Activated B cell treated with CpG ODN at 0.5 μM for 24 hours (primary cell): ENCODE measurements at regions of chr16 and their contacts with region 1.

Region 1: GRCh38 chr16:1782352-1783091 is at the starts of genes NUBP2 and SPSB3:
- DNase-seq: peak; percentile 91
- ATAC-seq: peak; percentile 88
- H3K4me3 Mint-ChIP-seq: peak within 1 kb of the TSS; percentile 89
- H3K27ac Mint-ChIP-seq: peak within 1 kb of the TSS; percentile 87
- H3K4me1 Mint-ChIP-seq: peaks cover 24% of the 10 kb centered on the region
- H3K27me3 Mint-ChIP-seq: no peaks in the 10 kb centered on the region
- CTCF ChIP-seq: no peak
- total RNA-seq, gene NUBP2: 53.7 and 54.2 TPM in 2 replicates
- total RNA-seq, gene SPSB3: 36.4 and 40.3 TPM in 2 replicates

Region 2: GRCh38 chr16:1677802-1678496 is 104.6 kb before region 1 on chr16 and contains the start of gene JPT2:
- CTCF ChIA-PET with region 1: no interaction called
- POLR2A ChIA-PET with region 1: interaction called, 10 read pairs
- intact Hi-C with region 1: no loop called
- DNase-seq: peak; percentile 92
- ATAC-seq: peak; percentile 96
- H3K4me3 Mint-ChIP-seq: peak within 1 kb of the TSS; percentile 89
- H3K27ac Mint-ChIP-seq: peak within 1 kb of the TSS; percentile 76
- H3K4me1 Mint-ChIP-seq: peaks cover 29% of the 10 kb centered on the region
- H3K27me3 Mint-ChIP-seq: no peaks in the 10 kb centered on the region
- CTCF ChIP-seq: no peak
- total RNA-seq, gene JPT2: 43.4 and 48.7 TPM in 2 replicates

Region 3: GRCh38 chr16:1713933-1714332 is 68.6 kb before region 1 on chr16:
- CTCF ChIA-PET with region 1: no interaction called
- POLR2A ChIA-PET with region 1: interaction called, 5 read pairs
- intact Hi-C with region 1: loop called (anchors 2 kb)
- DNase-seq: peak; percentile 49
- ATAC-seq: peak; percentile 90
- H3K4me3 Mint-ChIP-seq: peak overlapping the region; percentile 70
- H3K27ac Mint-ChIP-seq: peak overlapping the region; percentile 94
- H3K4me1 Mint-ChIP-seq: peaks cover 76% of the 10 kb centered on the region
- H3K27me3 Mint-ChIP-seq: no peaks in the 10 kb centered on the region
- CTCF ChIP-seq: no peak

Region 4: GRCh38 chr16:1942810-1943726 is 160.5 kb after region 1 on chr16 and contains the start of gene MSRB1:
- CTCF ChIA-PET with region 1: no interaction called
- POLR2A ChIA-PET with region 1: interaction called, 4 read pairs
- intact Hi-C with region 1: loop called (anchors 1 kb)
- DNase-seq: peak; percentile 99
- ATAC-seq: peak; percentile 98
- H3K4me3 Mint-ChIP-seq: peak within 1 kb of the TSS; percentile 87
- H3K27ac Mint-ChIP-seq: peak within 1 kb of the TSS; percentile 74
- H3K4me1 Mint-ChIP-seq: peaks cover 30% of the 10 kb centered on the region
- H3K27me3 Mint-ChIP-seq: no peaks in the 10 kb centered on the region
- CTCF ChIP-seq: no peak
- total RNA-seq, gene MSRB1: 14.7 and 16.6 TPM in 2 replicates